Heart right ventricle (tissue), 16 donors: ENCODE measurements at regions of chr12 and their contacts with region 1.

Region 1: GRCh38 chr12:122951979-122952892 is 14.0 kb downstream of the ABCB9 start:
- DNase-seq: peak; percentile 73 to 78
- ATAC-seq: peak; percentile 91 to 95 (median 94)
- H3K4me3 ChIP-seq: no peak overlapping the region
- H3K27ac ChIP-seq: no peak overlapping the region
- H3K4me1 ChIP-seq: peaks cover 0 to 19% (median 10%) of the 10 kb centered on the region in 9 donors
- H3K27me3 ChIP-seq: no peaks in the 10 kb centered on the region
- CTCF ChIP-seq: peak; percentile 81 to 95 (median 91)

Region 2: DNA sequence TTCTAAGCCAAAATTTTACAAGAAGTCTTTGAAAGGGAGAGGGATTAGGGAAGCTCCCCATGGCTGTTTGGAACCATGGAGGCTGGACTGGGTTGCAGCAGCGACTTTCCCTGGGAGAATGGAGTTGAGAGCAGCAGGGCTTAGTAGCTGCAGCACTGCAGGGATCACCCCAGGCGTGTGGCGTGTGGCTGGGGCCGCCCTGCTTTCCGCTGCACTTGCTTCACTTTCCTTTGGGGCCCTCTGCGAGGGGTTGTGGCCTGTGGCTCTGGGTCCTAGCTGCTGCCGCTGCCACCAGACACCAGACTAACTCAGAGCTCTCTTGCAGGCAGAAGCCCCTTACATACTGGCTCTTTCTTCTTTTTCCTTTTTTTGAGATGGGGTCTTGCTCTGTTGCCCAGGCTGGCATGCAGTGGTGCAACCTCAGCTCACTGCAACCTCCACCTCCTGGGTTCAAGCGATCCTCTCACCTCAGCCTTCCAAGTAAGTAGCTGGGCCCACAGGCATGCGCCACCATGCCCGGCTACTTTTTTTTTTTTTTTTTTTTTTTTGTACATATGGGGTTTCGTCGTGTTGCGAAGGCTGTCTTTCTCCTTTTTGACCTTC is 152.5 kb before region 1 on chr12:
- intact Hi-C with region 1: loop called in 7 of 10 experiments (anchors 5 to 10 kb)
- DNase-seq: no peak
- ATAC-seq: no peak
- H3K4me3 ChIP-seq: no peak overlapping the region
- H3K27ac ChIP-seq: no peak overlapping the region
- H3K4me1 ChIP-seq: peaks cover 0 to 3% (median 0%) of the 10 kb centered on the region in 9 donors
- H3K27me3 ChIP-seq: no peaks in the 10 kb centered on the region
- CTCF ChIP-seq: no peak

Region 3: GRCh38 chr12:122860346-122861090 is 91.7 kb before region 1 on chr12:
- intact Hi-C with region 1: loop called (anchors 1 to 5 kb)
- DNase-seq: peak; percentile 87 to 90
- ATAC-seq: peak; percentile 59 to 87 (median 77)
- H3K4me3 ChIP-seq: no peak overlapping the region
- H3K27ac ChIP-seq: peak overlapping the region in 8 of 10 donors; percentile 45 to 76 (median 54)
- H3K4me1 ChIP-seq: peaks cover 3 to 54% (median 45%) of the 10 kb centered on the region in 9 donors
- H3K27me3 ChIP-seq: no peaks in the 10 kb centered on the region
- CTCF ChIP-seq: peak; percentile 84 to 95 (median 88)

Region 4: GRCh38 chr12:122895705-122896636 is 56.3 kb before region 1 on chr12 and contains the start of gene VPS37B:
- intact Hi-C with region 1: loop called in 1 of 10 experiments (anchors 5 kb)
- DNase-seq: peak; percentile 83 to 87
- ATAC-seq: peak; percentile 80 to 92 (median 86)
- H3K4me3 ChIP-seq: peak within 1 kb of the TSS; percentile 49 to 90 (median 76)
- H3K27ac ChIP-seq: peak within 1 kb of the TSS; percentile 14 to 94 (median 89)
- H3K4me1 ChIP-seq: peaks cover 5 to 66% (median 44%) of the 10 kb centered on the region in 9 donors
- H3K27me3 ChIP-seq: no peaks in the 10 kb centered on the region
- CTCF ChIP-seq: peak in 1 of 9 donors; percentile 13
- total RNA-seq, gene VPS37B: 17.6 to 33.2 (median 19.8) TPM